Heart right ventricle (tissue), 16 donors: ENCODE measurements at regions of chr20 and their contacts with region 1.

Region 1: GRCh38 chr20:60869625-60870024 is 382.4 kb upstream of the CDH4 start:
- DNase-seq: no peak
- ATAC-seq: no peak
- H3K4me3 ChIP-seq: no peak overlapping the region
- H3K27ac ChIP-seq: no peak overlapping the region
- H3K4me1 ChIP-seq: no peaks in the 10 kb centered on the region
- H3K27me3 ChIP-seq: peaks cover 0 to 33% (median 19%) of the 10 kb centered on the region in 7 donors
- CTCF ChIP-seq: no peak

Region 2: GRCh38 chr20:60935971-60936370 is 66.3 kb after region 1 on chr20:
- intact Hi-C with region 1: loop called in 1 of 10 experiments (anchors 10 kb)
- DNase-seq: no peak
- ATAC-seq: no peak
- H3K4me3 ChIP-seq: no peak overlapping the region
- H3K27ac ChIP-seq: no peak overlapping the region
- H3K4me1 ChIP-seq: no peaks in the 10 kb centered on the region
- H3K27me3 ChIP-seq: peaks cover 0 to 23% (median 0%) of the 10 kb centered on the region in 7 donors
- CTCF ChIP-seq: no peak

Region 3: GRCh38 chr20:60999256-60999655 is 129.6 kb after region 1 on chr20:
- intact Hi-C with region 1: no loop called
- DNase-seq: no peak
- ATAC-seq: peak in 1 of 8 donors; percentile 20
- H3K4me3 ChIP-seq: no peak overlapping the region
- H3K27ac ChIP-seq: no peak overlapping the region
- H3K4me1 ChIP-seq: no peaks in the 10 kb centered on the region
- H3K27me3 ChIP-seq: peaks cover 0 to 32% (median 12%) of the 10 kb centered on the region in 7 donors
- CTCF ChIP-seq: no peak

Region 4: DNA sequence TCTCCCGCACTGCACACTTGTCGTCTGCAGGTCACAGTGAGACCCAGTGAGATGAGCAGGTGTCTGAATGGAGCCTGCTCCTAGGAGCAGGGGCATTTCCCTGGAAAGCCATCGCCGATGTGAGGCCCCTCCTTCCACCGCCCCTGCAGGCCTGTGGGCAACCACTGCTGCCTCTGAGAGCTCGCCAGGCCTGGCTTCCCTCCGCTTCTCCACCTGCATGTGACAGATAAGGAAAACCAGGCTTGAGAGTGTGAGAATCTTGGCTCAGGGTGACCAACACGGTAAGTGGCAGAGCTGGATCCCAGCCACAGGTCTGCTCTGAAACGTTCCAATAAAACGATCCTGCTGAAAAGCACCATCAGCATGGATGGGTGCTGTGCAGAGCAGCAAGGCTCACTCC is 715.2 kb after region 1 on chr20:
- intact Hi-C with region 1: no loop called
- DNase-seq: peak; percentile 52 to 66
- ATAC-seq: peak; percentile 55 to 97 (median 89)
- H3K4me3 ChIP-seq: no peak overlapping the region
- H3K27ac ChIP-seq: no peak overlapping the region
- H3K4me1 ChIP-seq: peaks cover 0 to 12% (median 0%) of the 10 kb centered on the region in 9 donors
- H3K27me3 ChIP-seq: peaks cover 0 to 60% (median 37%) of the 10 kb centered on the region in 7 donors
- CTCF ChIP-seq: no peak